CD4-positive, alpha-beta T cell (primary cell): ENCODE measurements at regions of chr11 and their contacts with region 1.

Region 1: GRCh38 chr11:86174101-86175046 is 70.2 kb upstream of the EED start:
- DNase-seq: no peak
- ATAC-seq: no peak
- H3K4me3 ChIP-seq: no peak overlapping the region
- H3K4me3 Mint-ChIP-seq: no peak overlapping the region
- H3K27ac ChIP-seq: no peak overlapping the region
- H3K27ac Mint-ChIP-seq: no peak overlapping the region
- H3K4me1 ChIP-seq: no peaks in the 10 kb centered on the region
- H3K4me1 Mint-ChIP-seq: no peaks in the 10 kb centered on the region
- H3K27me3 ChIP-seq: no peaks in the 10 kb centered on the region
- H3K27me3 Mint-ChIP-seq: no peaks in the 10 kb centered on the region
- CTCF ChIP-seq: no peak

Region 2: GRCh38 chr11:86089659-86090058 is 84.7 kb before region 1 on chr11:
- CTCF ChIA-PET with region 1: no interaction called
- POLR2A ChIA-PET with region 1: no interaction called
- intact Hi-C with region 1: loop called in 1 of 2 experiments (anchors 5 kb)
- DNase-seq: no peak
- ATAC-seq: no peak
- H3K4me3 ChIP-seq: no peak overlapping the region
- H3K4me3 Mint-ChIP-seq: no peak overlapping the region
- H3K27ac ChIP-seq: no peak overlapping the region
- H3K27ac Mint-ChIP-seq: no peak overlapping the region
- H3K4me1 ChIP-seq: no peaks in the 10 kb centered on the region
- H3K4me1 Mint-ChIP-seq: no peaks in the 10 kb centered on the region
- H3K27me3 ChIP-seq: no peaks in the 10 kb centered on the region
- H3K27me3 Mint-ChIP-seq: peaks cover 8% of the 10 kb centered on the region
- CTCF ChIP-seq: no peak